Thyroid gland (tissue), 4 donors: ENCODE measurements at regions of chr5 and their contacts with region 1.

Region 1: DNA sequence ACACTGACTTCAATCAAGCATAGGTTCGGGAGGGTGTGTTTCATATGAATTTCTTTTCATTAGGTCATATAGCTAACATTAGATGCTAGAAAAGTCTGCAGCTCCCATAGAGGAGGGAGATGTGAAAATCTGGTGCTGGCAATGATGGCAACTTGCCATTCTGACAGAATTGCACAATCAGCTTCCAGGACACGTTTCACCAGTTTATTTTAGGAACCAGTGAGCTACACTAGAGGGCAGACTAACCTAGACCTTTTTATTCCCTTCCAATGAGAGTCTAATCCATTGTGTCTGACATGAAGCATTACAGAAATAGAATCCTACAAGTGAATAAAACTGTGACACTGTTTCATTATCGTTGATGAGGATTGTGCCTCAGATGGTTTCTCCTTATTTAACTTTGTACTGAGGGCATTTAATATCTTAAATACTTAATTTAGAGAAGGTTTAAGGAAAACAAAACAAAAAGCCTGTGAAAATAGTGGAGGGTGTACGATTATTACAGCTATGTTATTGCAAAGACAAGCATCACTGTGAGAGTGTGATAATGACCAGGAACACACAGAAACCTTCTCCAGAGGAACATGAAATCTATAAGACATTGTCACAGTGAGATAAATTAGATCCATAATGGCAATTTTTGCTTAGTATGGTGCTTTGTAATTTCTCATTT is 363.3 kb upstream of the RPS23 start:
- DNase-seq: peak; percentile 76 to 79
- H3K4me3 ChIP-seq: no peak overlapping the region
- H3K27ac ChIP-seq: peak overlapping the region in 1 of 3 donors; percentile 27
- H3K4me1 ChIP-seq: peaks cover 24 to 25% of the 10 kb centered on the region in 2 donors
- H3K27me3 ChIP-seq: no peaks in the 10 kb centered on the region
- CTCF ChIP-seq: peak; percentile 30 to 92 (median 74)
- POLR2A ChIP-seq: no peak

Region 2: GRCh38 chr5:81631124-81631523 is 1010.3 kb before region 1 on chr5:
- intact Hi-C with region 1: no loop called
- DNase-seq: no peak
- H3K4me3 ChIP-seq: no peak overlapping the region
- H3K27ac ChIP-seq: no peak overlapping the region
- H3K4me1 ChIP-seq: no peaks in the 10 kb centered on the region
- H3K27me3 ChIP-seq: no peaks in the 10 kb centered on the region
- CTCF ChIP-seq: no peak
- POLR2A ChIP-seq: no peak

Region 3: DNA sequence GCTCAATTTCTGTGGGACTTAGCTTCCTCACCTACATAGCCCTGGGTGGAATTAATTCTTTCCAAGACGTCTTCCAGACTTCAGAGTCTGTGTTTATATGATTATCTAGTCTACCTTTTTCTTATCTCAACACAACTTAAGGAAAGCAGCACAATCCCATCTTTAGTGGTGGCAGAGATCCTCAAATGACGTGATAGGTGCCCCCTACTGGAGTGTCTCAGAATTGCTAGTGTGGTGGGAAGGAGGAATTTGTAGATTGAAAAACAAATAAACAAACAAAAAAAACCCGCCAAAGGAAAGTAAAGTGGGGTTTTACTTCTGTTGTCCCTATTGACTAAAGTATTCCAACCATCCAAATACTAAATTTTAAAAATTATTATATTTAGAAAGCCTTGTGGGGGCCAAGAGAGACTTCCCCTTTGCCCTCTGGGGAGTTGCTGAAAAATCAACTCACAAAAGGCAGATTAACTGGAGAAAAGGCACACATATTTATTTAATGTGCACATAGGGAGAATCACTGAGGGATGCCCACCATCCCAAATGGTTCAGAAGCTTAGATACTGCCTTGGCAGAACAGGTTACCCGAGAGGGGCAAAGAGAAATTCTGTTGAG is 152.4 kb after region 1 on chr5:
- intact Hi-C with region 1: loop called (anchors 10 kb)
- DNase-seq: peak; percentile 12 to 22
- H3K4me3 ChIP-seq: no peak overlapping the region
- H3K27ac ChIP-seq: no peak overlapping the region
- H3K4me1 ChIP-seq: no peaks in the 10 kb centered on the region
- H3K27me3 ChIP-seq: no peaks in the 10 kb centered on the region
- CTCF ChIP-seq: peak; percentile 49 to 72 (median 60)
- POLR2A ChIP-seq: no peak